ENCODE measurements at regions of chr10 and their contacts with region 1.

Region 1: DNA sequence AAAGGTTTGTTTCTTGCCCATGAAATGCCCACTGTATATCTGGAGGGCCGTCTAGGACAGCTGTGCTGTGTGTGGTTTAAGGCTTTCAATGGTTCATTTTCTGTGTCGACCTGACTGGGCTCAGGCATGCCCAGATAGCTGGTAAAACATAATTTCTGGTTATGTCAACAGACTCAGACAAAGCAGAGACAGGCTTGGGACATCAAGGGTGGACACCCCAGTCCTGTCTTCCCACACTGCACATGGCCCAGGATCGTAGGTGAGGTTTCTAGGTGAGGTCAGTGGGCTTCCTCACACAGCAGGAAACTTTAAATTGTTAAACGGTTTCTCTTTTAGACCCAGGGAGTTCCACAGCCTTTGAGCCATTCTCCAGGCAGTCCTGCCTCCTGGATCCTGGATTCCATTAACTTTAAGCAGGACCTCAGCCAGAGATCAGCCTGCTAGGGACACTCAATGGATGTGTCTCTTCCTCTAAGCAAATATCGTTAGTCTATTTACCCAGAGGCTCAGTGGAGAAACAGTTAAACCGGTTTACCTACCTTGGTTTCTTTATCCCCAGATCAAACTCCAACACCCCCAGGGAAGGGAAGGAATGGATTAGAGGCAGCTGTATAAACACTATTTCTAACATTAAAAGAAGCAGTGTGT is 66.4 kb downstream of the ST8SIA6 start:
- DNase-seq: peak; percentile 24
- H3K4me3 Mint-ChIP-seq: peak overlapping the region; percentile 47
- H3K27ac Mint-ChIP-seq: peak overlapping the region; percentile 78
- H3K4me1 Mint-ChIP-seq: peaks cover 20% of the 10 kb centered on the region
- H3K27me3 Mint-ChIP-seq: no peaks in the 10 kb centered on the region
- CTCF ChIP-seq: no peak

Region 2: DNA sequence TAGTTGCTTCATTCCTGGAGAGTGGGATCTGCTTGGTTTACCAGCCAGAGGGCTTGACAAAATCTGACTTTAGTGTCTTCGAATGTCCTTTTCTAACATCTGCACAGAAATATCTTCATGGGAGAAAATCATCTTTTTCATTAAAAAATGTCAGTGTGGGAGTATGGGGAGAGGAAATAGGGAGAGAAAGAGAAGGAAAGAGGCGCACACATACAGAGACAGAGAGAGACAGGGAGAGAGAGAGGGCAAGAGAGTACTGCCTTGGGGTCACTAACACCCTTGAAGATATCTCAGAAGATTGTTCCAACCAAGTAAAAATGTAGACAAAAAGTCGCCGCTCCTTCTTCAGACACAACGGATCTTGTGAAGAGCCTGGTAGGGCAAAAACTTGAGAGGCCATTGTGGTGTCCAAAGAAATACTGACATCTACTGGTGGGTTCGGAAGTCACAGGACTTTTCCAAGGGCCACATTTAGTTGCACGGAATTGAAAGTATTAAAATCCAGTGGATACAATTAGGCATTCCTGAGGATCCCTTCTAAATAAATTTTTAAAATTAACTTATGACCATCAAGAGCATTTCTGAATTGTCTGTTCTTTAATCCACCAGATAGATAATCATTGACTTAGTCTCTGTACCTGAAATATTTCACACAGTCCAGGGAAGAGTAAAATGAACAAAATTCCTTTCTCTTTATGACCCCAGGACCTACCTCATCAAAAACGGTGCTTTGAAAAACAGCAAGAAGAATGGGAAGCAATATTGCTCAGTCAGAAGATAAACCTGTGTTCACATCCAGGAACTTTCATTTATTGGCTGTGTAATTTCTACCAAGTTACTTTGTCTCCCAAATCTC is 130.3 kb before region 1 on chr10:
- CTCF ChIA-PET with region 1: no interaction called
- intact Hi-C with region 1: no loop called
- DNase-seq: peak; percentile 64
- H3K4me3 Mint-ChIP-seq: peak overlapping the region; percentile 43
- H3K27ac Mint-ChIP-seq: peak overlapping the region; percentile 19
- H3K4me1 Mint-ChIP-seq: peaks cover 9% of the 10 kb centered on the region
- H3K27me3 Mint-ChIP-seq: peaks cover 23% of the 10 kb centered on the region
- CTCF ChIP-seq: peak; percentile 76

Region 3: DNA sequence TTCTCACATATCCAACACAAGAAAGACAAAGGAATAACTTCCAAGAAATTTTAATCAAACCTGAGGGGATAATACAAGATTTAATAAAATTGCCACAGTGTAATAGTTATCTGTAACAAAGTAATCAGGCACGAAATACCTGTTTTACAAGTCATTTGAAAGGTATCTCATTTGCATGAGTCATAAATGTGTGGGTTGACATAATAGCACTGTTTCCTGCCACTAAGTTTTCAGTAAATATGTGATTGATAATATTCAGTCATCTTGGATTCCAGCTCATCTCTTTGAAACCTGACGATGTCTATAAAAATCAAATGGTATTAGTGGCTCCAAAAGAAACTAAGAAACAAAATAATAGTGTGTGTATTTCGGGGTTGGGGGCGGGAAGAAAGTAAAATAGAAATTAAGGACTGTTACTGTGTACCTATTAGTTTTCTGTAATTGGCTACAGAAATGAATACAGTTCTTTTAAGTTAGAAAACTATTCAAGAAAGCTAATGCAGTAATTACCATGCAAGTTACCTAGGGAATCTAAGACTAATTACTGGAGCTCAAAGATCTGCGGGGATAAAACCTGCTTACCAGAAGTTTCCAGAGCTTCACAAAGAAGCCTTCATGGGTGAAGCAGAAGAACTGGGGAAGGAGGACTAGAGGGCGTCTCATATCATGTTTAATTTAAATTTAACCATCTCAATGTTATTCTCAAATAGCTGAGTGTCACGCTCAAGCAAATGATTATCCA is 34.3 kb before region 1 on chr10:
- CTCF ChIA-PET with region 1: interaction called, 3 read pairs
- intact Hi-C with region 1: loop called (anchors 5 kb)
- DNase-seq: no peak
- H3K4me3 Mint-ChIP-seq: no peak overlapping the region
- H3K27ac Mint-ChIP-seq: peak overlapping the region; percentile 75
- H3K4me1 Mint-ChIP-seq: peaks cover 40% of the 10 kb centered on the region
- H3K27me3 Mint-ChIP-seq: no peaks in the 10 kb centered on the region
- CTCF ChIP-seq: no peak

Measured in Calu3 (cell line).